ENCODE measurements at regions of chr2 and their contacts with region 1.

Region 1: DNA sequence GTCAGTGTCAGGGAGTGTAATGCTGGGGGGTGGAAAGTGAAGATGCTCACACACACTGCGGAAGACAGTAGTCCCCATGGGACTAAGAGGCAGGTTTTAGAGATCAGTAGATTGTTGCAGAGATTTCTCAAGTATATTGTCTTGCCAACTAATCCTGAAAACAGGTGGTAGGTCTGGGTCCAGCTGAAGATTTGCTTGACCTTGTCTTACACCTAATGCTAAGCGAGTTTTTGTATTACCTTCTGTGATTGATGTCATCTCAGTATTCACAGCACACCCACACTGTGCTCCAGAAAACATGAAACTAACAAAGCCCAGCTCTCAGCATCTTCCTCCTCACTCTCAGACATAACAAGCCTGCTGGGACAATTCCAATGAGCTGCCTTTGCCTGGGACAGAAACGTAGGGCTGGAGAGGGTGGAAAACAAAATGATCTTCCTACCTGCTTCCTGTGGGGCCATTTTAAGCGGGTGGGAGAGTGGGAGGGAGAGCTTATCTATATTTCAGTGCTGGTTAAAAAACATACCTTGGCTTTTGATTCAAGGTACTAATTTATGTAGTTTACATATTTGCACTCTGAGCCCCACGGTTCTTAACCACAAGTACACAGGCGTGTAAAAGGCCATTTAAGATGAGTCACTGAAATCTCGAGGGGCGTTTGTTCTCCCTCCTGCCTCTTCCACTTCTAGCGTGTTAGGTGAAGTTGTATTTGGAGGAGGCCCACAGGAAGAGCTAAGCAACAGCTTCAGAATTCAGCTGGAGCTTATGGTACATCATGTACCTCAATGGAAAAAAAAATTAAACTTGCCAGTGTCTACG is 23.1 kb upstream of the RBMS1 start:
- DNase-seq: no peak
- H3K4me3 Mint-ChIP-seq: no peak overlapping the region
- H3K27ac Mint-ChIP-seq: peak overlapping the region; percentile 71
- H3K4me1 Mint-ChIP-seq: peaks cover 35% of the 10 kb centered on the region
- H3K27me3 Mint-ChIP-seq: peaks cover 15% of the 10 kb centered on the region

Region 2: DNA sequence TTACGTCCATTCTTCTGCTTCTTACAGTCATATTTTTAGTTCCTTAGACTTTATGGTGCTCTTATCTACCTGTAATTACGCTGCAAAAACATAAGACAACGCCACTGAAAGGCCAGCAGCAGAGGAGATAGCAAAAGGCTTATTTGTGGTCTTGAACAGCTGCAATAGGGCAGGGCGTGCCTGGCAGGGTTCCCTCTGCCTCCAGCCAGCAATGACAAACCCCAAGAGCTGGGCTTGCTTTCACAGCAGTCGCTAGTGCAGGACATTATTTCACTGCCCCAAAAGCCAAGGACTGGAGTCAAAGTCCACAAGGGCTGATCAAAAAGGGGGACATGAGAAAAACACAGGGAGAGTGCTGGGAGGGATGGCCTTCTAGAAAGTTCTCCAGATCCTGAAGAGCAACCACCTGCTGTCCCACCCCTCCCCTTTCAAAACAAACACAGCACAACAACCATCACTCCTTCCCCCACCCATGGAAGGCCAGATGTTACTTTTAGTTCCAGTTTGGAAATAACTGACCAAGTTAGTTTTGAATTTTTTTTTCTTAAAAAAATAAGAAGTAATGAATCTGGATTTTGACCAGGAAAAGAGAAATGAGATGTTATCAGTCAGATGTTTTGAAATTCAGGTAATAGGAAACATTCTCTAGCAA is 150.9 kb before region 1 on chr2:
- intact Hi-C with region 1: no loop called
- DNase-seq: no peak
- H3K4me3 Mint-ChIP-seq: no peak overlapping the region
- H3K27ac Mint-ChIP-seq: no peak overlapping the region
- H3K4me1 Mint-ChIP-seq: peaks cover 15% of the 10 kb centered on the region
- H3K27me3 Mint-ChIP-seq: no peaks in the 10 kb centered on the region

Region 3: DNA sequence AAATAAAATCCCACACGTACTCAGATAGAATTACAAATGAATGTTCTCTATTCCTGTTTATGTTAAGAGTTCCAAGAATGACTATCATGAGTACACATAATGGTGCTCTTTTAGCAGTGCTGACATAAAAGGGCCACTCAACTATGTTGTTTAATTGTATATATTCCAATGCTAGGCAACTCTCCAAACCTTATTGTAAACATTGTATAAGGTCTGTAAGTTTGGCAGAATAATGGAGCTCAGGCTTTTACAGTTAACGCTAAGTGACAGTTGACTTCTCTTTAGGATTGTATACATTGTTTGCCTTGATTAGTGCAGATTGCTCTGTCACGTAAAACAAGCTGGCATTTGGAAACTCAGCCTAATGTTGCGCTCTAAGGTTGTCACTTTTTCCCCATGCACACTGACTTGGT is 43.9 kb before region 1 on chr2:
- intact Hi-C with region 1: loop called (anchors 5 kb)
- DNase-seq: no peak
- H3K4me3 Mint-ChIP-seq: no peak overlapping the region
- H3K27ac Mint-ChIP-seq: no peak overlapping the region
- H3K4me1 Mint-ChIP-seq: peaks cover 50% of the 10 kb centered on the region
- H3K27me3 Mint-ChIP-seq: no peaks in the 10 kb centered on the region

Region 4: DNA sequence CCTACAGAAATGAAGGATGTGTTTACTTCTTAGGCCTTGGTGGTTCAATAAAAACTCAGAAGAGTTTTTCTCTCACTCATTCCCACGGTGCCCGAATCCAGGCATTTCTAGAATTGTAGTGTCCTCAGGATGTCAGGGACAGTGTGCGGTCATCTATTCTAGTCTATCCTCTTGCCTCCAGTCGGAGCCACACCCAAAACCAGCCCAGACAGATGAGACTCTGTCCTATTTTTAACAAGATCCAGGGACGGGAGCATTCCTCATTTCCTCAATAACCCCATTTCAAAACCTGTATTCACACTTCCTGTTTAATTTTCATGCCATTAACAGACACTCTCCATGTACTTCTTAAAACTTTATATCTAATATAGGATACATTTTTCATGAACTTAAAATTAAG is 11.5 kb before region 1 on chr2:
- intact Hi-C with region 1: loop called (anchors 1 kb)
- DNase-seq: no peak
- H3K4me3 Mint-ChIP-seq: no peak overlapping the region
- H3K27ac Mint-ChIP-seq: no peak overlapping the region
- H3K4me1 Mint-ChIP-seq: peaks cover 21% of the 10 kb centered on the region
- H3K27me3 Mint-ChIP-seq: peaks cover 18% of the 10 kb centered on the region

Region 5: DNA sequence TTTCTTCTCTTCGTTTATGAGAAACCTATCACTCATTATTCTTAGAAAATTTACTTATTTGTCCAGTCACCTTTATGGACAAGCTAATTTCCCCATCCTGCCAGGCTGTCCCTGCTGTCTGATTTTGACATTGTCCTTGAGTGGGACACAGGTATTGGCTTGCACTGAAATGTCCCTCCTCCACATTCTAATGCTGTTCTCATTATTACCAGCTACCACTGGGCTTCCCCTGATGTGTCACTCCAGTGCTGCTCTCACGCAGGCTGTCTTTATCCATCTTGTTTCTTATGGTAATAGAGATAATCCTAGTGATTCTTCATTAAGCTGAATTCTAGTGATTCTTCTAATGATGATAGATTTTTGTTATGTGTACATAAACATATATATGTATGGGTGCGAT is 25.0 kb after region 1 on chr2:
- intact Hi-C with region 1: no loop called
- DNase-seq: no peak
- H3K4me3 Mint-ChIP-seq: no peak overlapping the region
- H3K27ac Mint-ChIP-seq: no peak overlapping the region
- H3K4me1 Mint-ChIP-seq: no peaks in the 10 kb centered on the region
- H3K27me3 Mint-ChIP-seq: peaks cover 7% of the 10 kb centered on the region

Region 6: GRCh38 chr2:160652236-160652635 is 135.5 kb after region 1 on chr2:
- intact Hi-C with region 1: loop called (anchors 5 kb)
- DNase-seq: peak; percentile 55
- H3K4me3 Mint-ChIP-seq: peak overlapping the region; percentile 6
- H3K27ac Mint-ChIP-seq: peak overlapping the region; percentile 10
- H3K4me1 Mint-ChIP-seq: peaks cover 26% of the 10 kb centered on the region
- H3K27me3 Mint-ChIP-seq: peaks cover 14% of the 10 kb centered on the region

Region 7: GRCh38 chr2:160756481-160756880 is 239.7 kb after region 1 on chr2:
- intact Hi-C with region 1: no loop called
- DNase-seq: no peak
- H3K4me3 Mint-ChIP-seq: no peak overlapping the region
- H3K27ac Mint-ChIP-seq: no peak overlapping the region
- H3K4me1 Mint-ChIP-seq: no peaks in the 10 kb centered on the region
- H3K27me3 Mint-ChIP-seq: no peaks in the 10 kb centered on the region

Measured in activated T-helper 2 cell treated with anti-CD3 and anti-CD28 coated beads, Interferon-gamma antibody, Interleukin-2, Interleukin-4, amounts not matched to agents 10 μg/mL and 5 μg/mL and 100 μg/mL, durations not matched to agents 14 hours and 24 hours and 36 hours (primary cell).